ENCODE measurements at regions of chr19 and their contacts with region 1.

Region 1: GRCh38 chr19:58346961-58347931 is 6.0 kb downstream of the A1BG start:
- DNase-seq: peak; percentile 63
- ATAC-seq: peak; percentile 98
- H3K4me3 ChIP-seq: peak overlapping the region; percentile 66
- H3K27ac ChIP-seq: peak overlapping the region; percentile 57
- H3K4me1 ChIP-seq: peaks cover 6% of the 10 kb centered on the region; the same call in 1 of the 2 replicates
- H3K27me3 ChIP-seq: no peaks in the 10 kb centered on the region
- CTCF ChIP-seq: no peak
- POLR2A ChIP-seq: no peak
- RAD21 ChIP-seq: no peak

Region 2: DNA sequence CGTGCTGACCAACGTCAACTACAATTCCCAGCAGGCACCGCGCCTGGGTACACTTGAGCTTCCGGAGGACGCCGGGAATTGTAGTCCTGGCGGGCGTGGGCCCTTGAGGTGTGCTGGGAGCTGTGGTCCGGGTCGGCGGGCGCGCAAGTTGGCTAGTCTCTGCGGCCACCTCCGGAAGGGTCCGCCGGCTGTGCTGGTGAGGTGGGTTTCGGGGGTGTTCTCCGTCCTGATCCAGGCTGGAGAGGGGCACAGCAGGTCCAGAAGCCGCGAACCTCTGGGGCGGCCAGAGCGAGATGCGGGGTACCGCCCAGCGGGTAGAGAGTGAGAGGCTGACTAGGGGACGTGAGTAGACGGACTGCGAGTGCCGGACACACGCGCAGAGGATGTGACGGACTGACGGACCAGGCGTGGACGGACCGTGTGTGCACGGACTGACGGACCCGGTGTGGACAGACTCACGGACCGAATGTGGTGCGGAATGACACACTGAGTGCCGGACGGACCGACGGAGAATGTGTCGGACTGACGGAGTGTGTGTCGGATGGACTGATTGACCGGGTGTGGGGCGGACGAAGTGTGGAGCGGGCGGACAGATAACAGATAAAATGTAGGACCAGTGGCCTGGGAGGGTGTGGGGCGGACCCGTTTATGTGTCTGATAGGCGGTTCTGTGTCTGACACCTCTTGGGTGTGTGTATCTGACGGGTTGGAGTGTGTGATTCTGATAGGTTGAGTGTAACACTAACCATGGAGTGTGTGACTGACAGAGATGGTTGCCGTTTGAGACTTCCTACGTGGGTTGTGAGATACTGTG is 20.1 kb before region 1 on chr19 and contains the start of gene ZSCAN22:
- CTCF ChIA-PET with region 1: no interaction called
- POLR2A ChIA-PET with region 1: interaction called, 3 read pairs
- dilution Hi-C with region 1: no loop called
- in situ Hi-C with region 1: no loop called
- intact Hi-C with region 1: loop called (anchors 2 kb)
- DNase-seq: peak; percentile 95
- ATAC-seq: peak; percentile 94
- H3K4me3 ChIP-seq: peak within 1 kb of the TSS; percentile 72
- H3K27ac ChIP-seq: peak within 1 kb of the TSS; percentile 76
- H3K4me1 ChIP-seq: peaks cover 2% of the 10 kb centered on the region; the same call in 1 of the 2 replicates
- H3K27me3 ChIP-seq: no peaks in the 10 kb centered on the region
- CTCF ChIP-seq: no peak
- POLR2A ChIP-seq: peak; percentile 78; the same call in 1 of the 2 replicates
- RAD21 ChIP-seq: no peak; the same call in 1 of the 2 replicates
- total RNA-seq, gene ZSCAN22: 1.9 and 2.5 TPM in 2 replicates